ENCODE measurements at regions of chr18 and their contacts with region 1.

Region 1: DNA sequence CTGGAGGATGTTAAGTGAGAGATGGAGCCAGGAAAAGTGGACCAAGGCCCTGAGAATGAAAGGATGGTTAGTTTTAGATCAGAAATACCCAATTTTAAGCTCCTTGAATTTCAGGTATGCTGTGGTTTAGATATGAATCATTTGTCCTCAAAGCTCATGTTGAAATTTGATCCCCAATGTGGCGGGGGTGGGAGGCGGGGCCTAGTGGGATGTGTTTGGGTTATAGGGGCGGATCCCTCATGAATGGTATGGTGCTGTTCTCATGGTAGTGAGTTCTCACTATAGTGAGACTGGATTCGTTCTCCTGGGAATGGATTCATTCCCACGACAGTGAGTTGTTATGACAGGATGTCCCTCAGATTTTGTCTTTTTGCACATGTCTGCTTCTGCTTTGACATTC is 11.4 kb downstream of the MYO5B start:
- DNase-seq: peak; percentile 27 to 92
- H3K4me3 ChIP-seq: no peak overlapping the region
- H3K27ac ChIP-seq: peak overlapping the region; percentile 62
- H3K4me1 ChIP-seq: peaks cover 19% of the 10 kb centered on the region
- H3K27me3 ChIP-seq: no peaks in the 10 kb centered on the region
- CTCF ChIP-seq: no peak

Region 2: GRCh38 chr18:49432602-49433001 is 751.0 kb before region 1 on chr18:
- CTCF ChIA-PET with region 1: no interaction called
- POLR2A ChIA-PET with region 1: interaction called, 13 read pairs
- intact Hi-C with region 1: no loop called
- DNase-seq: no peak
- H3K4me3 ChIP-seq: no peak overlapping the region
- H3K27ac ChIP-seq: no peak overlapping the region
- H3K4me1 ChIP-seq: no peaks in the 10 kb centered on the region
- H3K27me3 ChIP-seq: no peaks in the 10 kb centered on the region
- CTCF ChIP-seq: no peak

Region 3: GRCh38 chr18:49866680-49867079 is 316.9 kb before region 1 on chr18:
- CTCF ChIA-PET with region 1: no interaction called
- POLR2A ChIA-PET with region 1: interaction called, 10 read pairs
- intact Hi-C with region 1: no loop called
- DNase-seq: peak in 1 of 2 experiments; percentile 23
- H3K4me3 ChIP-seq: no peak overlapping the region
- H3K27ac ChIP-seq: no peak overlapping the region
- H3K4me1 ChIP-seq: peaks cover 6% of the 10 kb centered on the region; the same call in 1 of the 2 replicates
- H3K27me3 ChIP-seq: no peaks in the 10 kb centered on the region
- CTCF ChIP-seq: no peak

Region 4: DNA sequence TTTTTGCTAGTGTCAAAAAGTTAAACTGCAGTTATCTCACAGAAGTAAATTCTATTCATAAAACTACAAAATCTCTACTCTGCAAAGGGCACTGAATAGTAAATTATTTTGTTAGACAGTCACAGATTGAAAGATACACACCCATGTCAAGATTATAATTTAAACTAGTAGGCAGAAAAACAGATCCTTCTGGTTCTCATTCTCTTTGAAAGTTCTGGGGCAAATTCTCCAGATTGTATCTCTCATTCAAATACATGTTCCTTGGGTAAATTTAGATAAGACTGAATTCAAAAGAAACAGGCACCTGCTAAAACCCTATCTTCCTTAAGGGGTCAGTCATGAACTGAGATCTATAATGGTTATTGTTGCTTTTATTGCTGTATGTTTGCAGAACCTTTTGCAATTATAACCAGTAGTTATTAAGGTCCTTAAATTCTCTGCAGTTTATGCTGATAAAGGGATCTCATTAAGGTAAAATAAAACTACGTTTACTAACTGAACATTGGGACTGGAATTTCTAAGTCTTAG is 72.2 kb before region 1 on chr18:
- CTCF ChIA-PET with region 1: interaction called, 14 read pairs
- POLR2A ChIA-PET with region 1: no interaction called
- intact Hi-C with region 1: no loop called
- DNase-seq: no peak
- H3K4me3 ChIP-seq: no peak overlapping the region
- H3K27ac ChIP-seq: no peak overlapping the region
- H3K4me1 ChIP-seq: peaks cover 29% of the 10 kb centered on the region
- H3K27me3 ChIP-seq: no peaks in the 10 kb centered on the region
- CTCF ChIP-seq: peak; percentile 37; the same call in 1 of the 2 replicates

Region 5: GRCh38 chr18:50158923-50159653 is 24.5 kb before region 1 on chr18:
- CTCF ChIA-PET with region 1: no interaction called
- POLR2A ChIA-PET with region 1: interaction called, 19 read pairs
- intact Hi-C with region 1: loop called (anchors 1 kb)
- DNase-seq: peak; percentile 48 to 98
- H3K4me3 ChIP-seq: peak overlapping the region; percentile 9; the same call in 1 of the 2 replicates
- H3K27ac ChIP-seq: peak overlapping the region; percentile 78
- H3K4me1 ChIP-seq: peaks cover 86% of the 10 kb centered on the region
- H3K27me3 ChIP-seq: no peaks in the 10 kb centered on the region
- CTCF ChIP-seq: no peak

Measured in PC-9 (cell line).